ENCODE measurements at regions of chr10 and their contacts with region 1.

Region 1: DNA sequence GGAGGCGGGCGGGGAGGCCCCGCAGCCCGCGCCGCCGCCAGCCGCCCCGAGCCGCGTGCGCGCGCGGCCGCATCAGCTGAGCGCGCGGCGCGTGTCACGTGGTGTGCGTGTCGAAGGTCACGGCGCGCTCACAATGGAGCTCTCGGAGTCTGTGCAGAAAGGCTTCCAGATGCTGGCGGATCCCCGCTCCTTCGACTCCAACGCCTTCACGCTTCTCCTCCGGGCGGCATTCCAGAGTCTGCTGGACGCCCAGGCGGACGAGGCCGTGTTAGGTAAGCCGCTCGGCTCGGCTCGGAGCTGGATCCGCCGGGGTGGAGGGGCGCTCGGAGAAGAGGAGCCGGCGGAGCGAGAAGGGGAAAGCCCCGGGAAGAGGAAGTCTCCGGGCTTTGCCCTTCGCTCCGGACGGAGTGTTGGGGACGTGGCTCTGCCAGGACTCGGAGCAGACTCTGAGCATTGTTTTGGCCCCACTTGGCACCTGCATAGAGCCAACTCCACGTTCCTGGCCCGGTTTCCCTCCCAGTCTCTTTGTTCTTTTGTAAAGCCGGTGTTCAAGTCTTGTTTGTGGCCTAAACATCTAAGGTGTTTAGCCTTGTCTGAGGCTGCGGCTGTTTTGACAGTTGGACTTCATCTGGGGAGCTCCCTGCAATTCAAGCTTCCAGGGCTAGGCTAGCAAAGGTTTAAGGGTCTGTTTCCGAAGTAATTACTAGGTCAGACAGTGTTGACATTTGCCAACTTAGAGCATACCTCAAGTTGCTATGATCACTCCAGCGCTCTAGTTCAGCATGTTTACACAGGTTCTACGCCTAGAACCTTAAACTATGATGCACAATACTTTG is at the start of gene COMMD3:
- DNase-seq: peak; percentile 57 to 94 (median 73)
- ATAC-seq: peak; percentile 49
- H3K4me3 ChIP-seq: peak within 1 kb of the TSS; percentile 77
- H3K27ac ChIP-seq: peak within 1 kb of the TSS; percentile 95
- H3K4me1 ChIP-seq: peaks cover 8 to 11% of the 10 kb centered on the region in 2 experiments; a peak in 3 of 5 replicates
- H3K27me3 ChIP-seq: no peaks in the 10 kb centered on the region
- CTCF ChIP-seq: no peak
- EP300 ChIP-seq: no peak
- POLR2A ChIP-seq: peak; percentile 89
- RAD21 ChIP-seq: no peak
- polyA plus RNA-seq, gene COMMD3: 216 to 217 TPM

Region 2: GRCh38 chr10:21525367-21526183 is 790.9 kb before region 1 on chr10 and contains the start of gene SKIDA1:
- CTCF ChIA-PET with region 1: no interaction called
- POLR2A ChIA-PET with region 1: no interaction called
- in situ Hi-C with region 1: no loop called
- intact Hi-C with region 1: loop called (anchors 5 kb)
- DNase-seq: peak; percentile 81 to 94 (median 86)
- ATAC-seq: peak; percentile 70
- H3K4me3 ChIP-seq: peak within 1 kb of the TSS; percentile 39
- H3K27ac ChIP-seq: peak within 1 kb of the TSS; percentile 92
- H3K4me1 ChIP-seq: peaks cover 15% of the 10 kb centered on the region in 2 experiments; a peak in 4 of 5 replicates
- H3K27me3 ChIP-seq: no peaks in the 10 kb centered on the region
- CTCF ChIP-seq: no peak
- EP300 ChIP-seq: peak; percentile 43
- POLR2A ChIP-seq: peak; percentile 87
- RAD21 ChIP-seq: no peak
- polyA plus RNA-seq, gene SKIDA1: 0.76 to 0.77 TPM

Region 3: DNA sequence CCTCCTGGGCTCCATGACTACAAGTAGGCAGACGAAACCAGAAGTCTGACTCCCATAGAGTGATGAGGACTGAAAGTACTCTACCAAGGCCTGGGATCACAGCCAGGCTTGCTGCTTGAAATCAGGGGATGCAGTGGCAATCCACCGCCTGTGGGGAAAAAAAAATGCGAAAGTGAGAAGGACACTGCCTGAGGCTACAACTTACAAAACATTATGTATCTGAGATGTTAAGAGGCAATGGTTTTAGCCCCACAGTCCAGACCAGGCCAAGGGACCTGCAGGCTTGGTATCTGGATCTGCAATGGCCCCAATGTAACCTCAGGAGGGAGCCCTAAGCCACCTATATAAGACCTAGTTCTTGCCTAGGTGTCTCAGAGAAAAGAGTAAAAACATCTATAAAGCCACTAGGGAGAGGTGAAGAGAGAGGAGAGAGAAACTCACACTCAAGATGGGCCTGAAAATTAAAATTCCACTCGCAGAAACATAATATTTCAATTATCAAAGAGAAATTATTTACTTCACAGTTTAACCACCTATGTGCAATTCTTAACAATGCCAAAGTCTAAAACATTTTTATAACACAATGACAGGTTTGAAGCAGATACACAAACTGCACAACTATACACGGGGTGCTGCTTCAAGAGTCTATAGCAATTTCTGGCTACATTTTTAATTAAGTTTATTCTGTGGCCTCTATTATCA is 326.9 kb before region 1 on chr10:
- CTCF ChIA-PET with region 1: no interaction called
- POLR2A ChIA-PET with region 1: no interaction called
- in situ Hi-C with region 1: no loop called
- intact Hi-C with region 1: loop called (anchors 2 kb)
- DNase-seq: peak; percentile 26 to 79 (median 48)
- ATAC-seq: peak; percentile 99
- H3K4me3 ChIP-seq: no peak overlapping the region
- H3K27ac ChIP-seq: no peak overlapping the region
- H3K4me1 ChIP-seq: peaks cover 0 to 3% of the 10 kb centered on the region in 2 experiments; a peak in 1 of 5 replicates
- H3K27me3 ChIP-seq: no peaks in the 10 kb centered on the region
- CTCF ChIP-seq: peak; percentile 75 to 85 (median 81)
- EP300 ChIP-seq: no peak
- POLR2A ChIP-seq: no peak
- RAD21 ChIP-seq: peak; percentile 66 to 78

Region 4: GRCh38 chr10:22228943-22229801 is 87.3 kb before region 1 on chr10:
- CTCF ChIA-PET with region 1: no interaction called
- POLR2A ChIA-PET with region 1: interaction called, 25 read pairs
- in situ Hi-C with region 1: no loop called
- intact Hi-C with region 1: loop called (anchors 2 kb)
- DNase-seq: peak; percentile 89 to 94 (median 90)
- ATAC-seq: peak; percentile 91
- H3K4me3 ChIP-seq: peak overlapping the region; percentile 44
- H3K27ac ChIP-seq: peak overlapping the region; percentile 92
- H3K4me1 ChIP-seq: peaks cover 5 to 8% of the 10 kb centered on the region in 2 experiments; a peak in 3 of 5 replicates
- H3K27me3 ChIP-seq: no peaks in the 10 kb centered on the region
- CTCF ChIP-seq: peak in 1 of 3 experiments; percentile 8; a peak in 2 of 6 replicates
- EP300 ChIP-seq: peak; percentile 78
- POLR2A ChIP-seq: peak; percentile 70
- RAD21 ChIP-seq: peak; percentile 37 to 39

Region 5: GRCh38 chr10:22391600-22391999 is 75.1 kb after region 1 on chr10:
- CTCF ChIA-PET with region 1: no interaction called
- POLR2A ChIA-PET with region 1: no interaction called
- in situ Hi-C with region 1: no loop called
- intact Hi-C with region 1: loop called (anchors 2 kb)
- DNase-seq: peak in 2 of 4 experiments; percentile 38 to 85
- ATAC-seq: peak; percentile 83
- H3K4me3 ChIP-seq: peak overlapping the region; percentile 34
- H3K27ac ChIP-seq: peak overlapping the region; percentile 58
- H3K4me1 ChIP-seq: peaks cover 0 to 21% of the 10 kb centered on the region in 2 experiments; a peak in 2 of 5 replicates
- H3K27me3 ChIP-seq: no peaks in the 10 kb centered on the region
- CTCF ChIP-seq: no peak
- EP300 ChIP-seq: peak; percentile 33; the same call in 1 of the 2 replicates
- POLR2A ChIP-seq: no peak; the same call in 1 of the 2 replicates
- RAD21 ChIP-seq: no peak

Region 6: GRCh38 chr10:22505911-22506685 is 189.6 kb after region 1 on chr10:
- CTCF ChIA-PET with region 1: no interaction called
- POLR2A ChIA-PET with region 1: no interaction called
- in situ Hi-C with region 1: no loop called
- intact Hi-C with region 1: loop called (anchors 5 kb)
- DNase-seq: no peak
- ATAC-seq: no peak
- H3K4me3 ChIP-seq: no peak overlapping the region
- H3K27ac ChIP-seq: no peak overlapping the region
- H3K4me1 ChIP-seq: peaks cover 0 to 21% of the 10 kb centered on the region in 2 experiments; a peak in 3 of 5 replicates
- H3K27me3 ChIP-seq: no peaks in the 10 kb centered on the region
- CTCF ChIP-seq: no peak
- EP300 ChIP-seq: no peak
- POLR2A ChIP-seq: no peak
- RAD21 ChIP-seq: no peak

Region 7: DNA sequence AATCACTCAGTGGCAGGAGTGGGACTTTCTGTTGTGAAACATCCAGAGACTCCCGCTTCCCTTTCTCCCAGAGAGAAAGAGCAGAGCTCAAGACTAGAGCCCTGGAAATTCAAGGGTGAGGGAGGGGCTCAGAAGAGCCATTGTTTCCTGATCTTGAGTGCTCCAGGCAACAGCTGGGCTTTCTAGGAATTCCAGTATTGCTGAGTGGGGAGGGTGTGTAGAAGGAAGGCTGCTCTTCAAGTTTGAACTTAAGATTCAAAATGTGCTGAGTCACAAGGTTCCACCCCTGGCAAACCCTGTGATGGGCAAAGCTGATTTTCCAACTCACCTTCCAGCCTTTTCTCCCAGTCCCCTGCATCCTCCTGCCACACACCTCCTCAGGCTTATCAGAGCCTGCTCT is 736.5 kb after region 1 on chr10:
- CTCF ChIA-PET with region 1: no interaction called
- POLR2A ChIA-PET with region 1: no interaction called
- in situ Hi-C with region 1: no loop called
- intact Hi-C with region 1: loop called (anchors 10 kb)
- DNase-seq: peak in 1 of 4 experiments; percentile 68
- ATAC-seq: no peak; the same call in 2 of the 3 replicates
- H3K4me3 ChIP-seq: no peak overlapping the region
- H3K27ac ChIP-seq: peak overlapping the region; percentile 82
- H3K4me1 ChIP-seq: peaks cover 12 to 61% of the 10 kb centered on the region in 2 experiments
- H3K27me3 ChIP-seq: no peaks in the 10 kb centered on the region
- CTCF ChIP-seq: no peak
- EP300 ChIP-seq: peak; percentile 26; the same call in 1 of the 2 replicates
- POLR2A ChIP-seq: no peak
- RAD21 ChIP-seq: no peak

Measured in K562 (cell line).